PC-9 (cell line): ENCODE measurements at regions of chr3 and their contacts with region 1.

Region 1: GRCh38 chr3:142866841-142867631 is 21.8 kb downstream of the PCOLCE2 start:
- DNase-seq: peak in 1 of 2 experiments; percentile 69
- H3K4me3 ChIP-seq: no peak overlapping the region
- H3K27ac ChIP-seq: no peak overlapping the region
- H3K4me1 ChIP-seq: peaks cover 36% of the 10 kb centered on the region
- H3K27me3 ChIP-seq: no peaks in the 10 kb centered on the region
- CTCF ChIP-seq: no peak

Region 2: GRCh38 chr3:141412087-141412935 is 1454.7 kb before region 1 on chr3:
- CTCF ChIA-PET with region 1: interaction called, 20 read pairs
- POLR2A ChIA-PET with region 1: no interaction called
- intact Hi-C with region 1: no loop called
- DNase-seq: peak; percentile 33 to 80
- H3K4me3 ChIP-seq: peak overlapping the region; percentile 37; the same call in 1 of the 2 replicates
- H3K27ac ChIP-seq: peak overlapping the region; percentile 47
- H3K4me1 ChIP-seq: peaks cover 49% of the 10 kb centered on the region
- H3K27me3 ChIP-seq: no peaks in the 10 kb centered on the region
- CTCF ChIP-seq: no peak

Region 3: GRCh38 chr3:142385078-142385477 is 482.0 kb before region 1 on chr3:
- CTCF ChIA-PET with region 1: no interaction called
- POLR2A ChIA-PET with region 1: no interaction called
- intact Hi-C with region 1: no loop called
- DNase-seq: no peak
- H3K4me3 ChIP-seq: no peak overlapping the region
- H3K27ac ChIP-seq: no peak overlapping the region
- H3K4me1 ChIP-seq: no peaks in the 10 kb centered on the region
- H3K27me3 ChIP-seq: no peaks in the 10 kb centered on the region
- CTCF ChIP-seq: no peak

Region 4: GRCh38 chr3:142768338-142768737 is 98.7 kb before region 1 on chr3:
- CTCF ChIA-PET with region 1: no interaction called
- POLR2A ChIA-PET with region 1: no interaction called
- intact Hi-C with region 1: no loop called
- DNase-seq: no peak
- H3K4me3 ChIP-seq: no peak overlapping the region
- H3K27ac ChIP-seq: no peak overlapping the region
- H3K4me1 ChIP-seq: no peaks in the 10 kb centered on the region
- H3K27me3 ChIP-seq: no peaks in the 10 kb centered on the region
- CTCF ChIP-seq: no peak

Region 5: DNA sequence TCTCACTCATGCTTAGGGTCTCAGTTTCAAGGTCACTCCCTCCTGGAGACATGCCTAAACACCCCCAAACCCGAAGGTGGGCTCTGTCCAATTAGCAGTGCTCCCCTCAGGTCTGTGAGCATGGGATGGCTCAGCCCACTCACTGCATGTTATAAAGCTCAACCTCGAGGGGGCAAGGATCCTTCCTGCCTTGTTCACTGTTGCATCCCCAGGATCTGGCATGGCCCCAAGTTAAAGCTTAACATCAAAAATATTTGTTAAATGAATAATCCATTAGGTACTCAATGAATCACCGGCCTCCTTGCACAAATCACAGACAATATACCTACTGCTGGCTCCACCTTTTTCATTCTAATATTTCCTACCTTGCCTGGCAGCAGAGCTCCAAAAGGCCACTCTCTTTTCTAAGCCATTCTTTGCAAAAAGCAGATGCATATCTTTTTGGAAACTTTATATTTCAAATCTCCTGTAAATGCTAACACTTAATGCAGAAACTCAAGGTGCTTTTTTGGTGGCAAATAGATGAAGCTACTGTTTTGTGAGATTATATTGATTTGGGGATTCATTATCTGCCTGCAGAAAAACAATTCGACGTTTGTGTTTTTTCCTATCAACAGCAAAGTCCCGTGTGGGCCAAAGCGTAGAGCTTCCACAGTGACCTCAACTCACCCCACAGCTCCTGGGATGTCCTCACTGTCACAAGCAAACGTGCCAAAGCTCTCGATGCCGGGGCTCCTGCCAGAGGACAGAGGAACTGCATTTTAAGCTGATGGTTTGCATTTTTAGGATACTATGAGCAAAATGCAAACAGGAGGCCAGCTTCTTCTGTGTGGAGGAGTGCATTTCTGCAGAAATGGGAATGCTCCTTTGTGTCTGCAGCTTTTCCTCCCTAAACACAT is 13.5 kb before region 1 on chr3:
- CTCF ChIA-PET with region 1: interaction called, 8 read pairs
- POLR2A ChIA-PET with region 1: interaction called, 3 read pairs
- intact Hi-C with region 1: loop called (anchors 2 kb)
- DNase-seq: peak; percentile 66 to 89
- H3K4me3 ChIP-seq: no peak overlapping the region
- H3K27ac ChIP-seq: no peak overlapping the region
- H3K4me1 ChIP-seq: peaks cover 53% of the 10 kb centered on the region
- H3K27me3 ChIP-seq: no peaks in the 10 kb centered on the region
- CTCF ChIP-seq: no peak